CD8-positive, alpha-beta T cell (primary cell): ENCODE measurements at regions of chr14 and their contacts with region 1.

Region 1: GRCh38 chr14:64294672-64295413 is 672 bp upstream of the ESR2 start:
- DNase-seq: peak; percentile 66 to 87 (median 79)
- ATAC-seq: peak; percentile 88
- H3K4me3 ChIP-seq: peak overlapping the region; percentile 54 to 66
- H3K4me3 Mint-ChIP-seq: peak overlapping the region; percentile 78
- H3K27ac ChIP-seq: no peak overlapping the region
- H3K27ac Mint-ChIP-seq: no peak overlapping the region
- H3K4me1 ChIP-seq: peaks cover 10% of the 10 kb centered on the region
- H3K4me1 Mint-ChIP-seq: peaks cover 16% of the 10 kb centered on the region
- H3K27me3 ChIP-seq: peaks cover 0 to 3% of the 10 kb centered on the region in 2 experiments
- H3K27me3 Mint-ChIP-seq: peaks cover 16% of the 10 kb centered on the region
- CTCF ChIP-seq: peak; percentile 79

Region 2: DNA sequence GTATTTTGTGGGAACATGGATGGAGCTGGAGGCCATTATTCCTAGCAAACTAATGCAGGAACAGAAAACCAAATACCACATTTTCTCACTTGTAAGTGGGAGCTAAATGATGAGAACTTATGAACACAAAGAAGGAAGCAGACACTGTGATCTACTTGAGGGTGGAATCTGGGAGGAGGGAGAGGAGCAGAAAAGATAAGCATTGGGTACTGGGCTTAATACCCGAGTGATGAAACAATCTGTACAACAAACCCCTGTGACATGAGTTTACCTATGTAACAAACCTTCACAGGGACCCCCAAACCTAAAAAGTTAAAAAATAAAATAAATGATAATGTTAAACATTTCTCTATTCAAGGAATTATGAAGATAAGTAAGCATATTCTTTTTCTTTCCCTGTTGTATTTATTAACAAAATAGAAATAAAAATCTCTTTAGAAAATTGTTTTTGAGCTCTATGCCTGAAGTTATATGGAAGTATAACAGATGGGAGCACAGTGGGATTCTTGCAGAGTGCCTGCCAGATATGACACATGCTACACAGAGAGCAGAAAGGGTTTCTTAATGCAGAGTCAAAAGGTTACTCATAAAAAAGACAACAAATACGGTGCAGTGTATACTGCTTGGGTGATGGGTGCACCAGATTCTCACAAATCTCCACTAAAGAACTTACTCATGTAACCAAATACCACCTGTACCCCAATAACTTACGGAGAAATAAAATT is 494.0 kb before region 1 on chr14:
- CTCF ChIA-PET with region 1: interaction called, 22 read pairs
- POLR2A ChIA-PET with region 1: no interaction called
- intact Hi-C with region 1: loop called (anchors 1 kb)
- DNase-seq: no peak
- ATAC-seq: no peak
- H3K4me3 ChIP-seq: no peak overlapping the region
- H3K4me3 Mint-ChIP-seq: no peak overlapping the region
- H3K27ac ChIP-seq: no peak overlapping the region
- H3K27ac Mint-ChIP-seq: no peak overlapping the region
- H3K4me1 ChIP-seq: no peaks in the 10 kb centered on the region
- H3K4me1 Mint-ChIP-seq: peaks cover 2% of the 10 kb centered on the region
- H3K27me3 ChIP-seq: no peaks in the 10 kb centered on the region
- H3K27me3 Mint-ChIP-seq: no peaks in the 10 kb centered on the region
- CTCF ChIP-seq: no peak

Region 3: GRCh38 chr14:64026600-64026999 is 268.2 kb before region 1 on chr14:
- CTCF ChIA-PET with region 1: no interaction called
- POLR2A ChIA-PET with region 1: no interaction called
- intact Hi-C with region 1: loop called in 1 of 2 experiments (anchors 10 kb)
- DNase-seq: peak in 1 of 9 experiments; percentile 18
- ATAC-seq: no peak
- H3K4me3 ChIP-seq: no peak overlapping the region
- H3K4me3 Mint-ChIP-seq: no peak overlapping the region
- H3K27ac ChIP-seq: no peak overlapping the region
- H3K27ac Mint-ChIP-seq: no peak overlapping the region
- H3K4me1 ChIP-seq: no peaks in the 10 kb centered on the region
- H3K4me1 Mint-ChIP-seq: no peaks in the 10 kb centered on the region
- H3K27me3 ChIP-seq: no peaks in the 10 kb centered on the region
- H3K27me3 Mint-ChIP-seq: no peaks in the 10 kb centered on the region
- CTCF ChIP-seq: no peak

Region 4: DNA sequence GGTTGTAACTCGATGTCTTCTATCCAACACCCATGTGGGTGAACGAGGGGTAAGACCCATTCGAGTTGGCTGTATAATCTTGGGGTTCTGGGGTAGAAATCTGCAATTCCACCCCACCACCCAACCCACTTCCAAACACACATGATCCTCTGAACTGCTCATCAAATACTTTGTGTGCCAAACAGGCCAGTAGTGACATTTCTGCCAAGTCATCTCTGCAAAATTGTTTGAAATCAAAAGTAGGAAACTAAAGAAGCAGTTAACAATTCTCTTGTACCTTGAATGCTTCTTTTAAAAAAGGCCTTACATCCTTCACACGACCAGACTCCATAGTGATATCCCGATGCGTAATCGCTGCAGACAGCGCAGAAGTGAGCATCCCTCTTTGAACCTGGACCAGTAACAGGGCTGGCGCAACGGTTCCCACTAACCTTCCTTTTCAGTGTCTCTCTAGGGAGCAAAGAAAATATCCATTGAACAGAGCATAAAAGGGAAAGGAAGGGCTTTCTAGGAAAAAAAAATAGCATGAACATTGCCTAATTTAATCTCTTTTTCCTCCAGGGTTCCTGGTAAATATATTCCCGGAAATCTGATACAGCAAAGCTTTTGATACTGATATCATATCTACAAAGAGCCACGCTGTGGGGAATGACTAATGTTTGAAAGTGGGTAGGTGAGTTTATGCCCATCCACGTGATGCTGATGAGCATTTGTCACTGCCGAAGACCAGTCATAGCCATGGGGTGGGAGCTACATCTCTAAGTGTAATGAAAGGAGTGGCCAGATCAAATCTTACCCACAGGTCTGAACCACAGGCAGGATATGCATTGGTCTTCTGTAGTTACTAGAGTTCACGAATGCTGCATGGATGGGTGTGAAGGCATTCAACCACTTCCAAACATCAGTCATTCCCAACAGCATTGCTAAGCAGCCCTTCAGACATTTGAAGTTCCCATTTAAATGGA is 14.9 kb before region 1 on chr14:
- CTCF ChIA-PET with region 1: interaction called, 13 read pairs
- POLR2A ChIA-PET with region 1: no interaction called
- intact Hi-C with region 1: no loop called
- DNase-seq: no peak
- ATAC-seq: no peak
- H3K4me3 ChIP-seq: no peak overlapping the region
- H3K4me3 Mint-ChIP-seq: no peak overlapping the region
- H3K27ac ChIP-seq: no peak overlapping the region
- H3K27ac Mint-ChIP-seq: no peak overlapping the region
- H3K4me1 ChIP-seq: no peaks in the 10 kb centered on the region
- H3K4me1 Mint-ChIP-seq: peaks cover 2% of the 10 kb centered on the region
- H3K27me3 ChIP-seq: no peaks in the 10 kb centered on the region
- H3K27me3 Mint-ChIP-seq: no peaks in the 10 kb centered on the region
- CTCF ChIP-seq: no peak